Mammary epithelial cell (primary cell): ENCODE measurements at regions of chr1 and their contacts with region 1.

Region 1: DNA sequence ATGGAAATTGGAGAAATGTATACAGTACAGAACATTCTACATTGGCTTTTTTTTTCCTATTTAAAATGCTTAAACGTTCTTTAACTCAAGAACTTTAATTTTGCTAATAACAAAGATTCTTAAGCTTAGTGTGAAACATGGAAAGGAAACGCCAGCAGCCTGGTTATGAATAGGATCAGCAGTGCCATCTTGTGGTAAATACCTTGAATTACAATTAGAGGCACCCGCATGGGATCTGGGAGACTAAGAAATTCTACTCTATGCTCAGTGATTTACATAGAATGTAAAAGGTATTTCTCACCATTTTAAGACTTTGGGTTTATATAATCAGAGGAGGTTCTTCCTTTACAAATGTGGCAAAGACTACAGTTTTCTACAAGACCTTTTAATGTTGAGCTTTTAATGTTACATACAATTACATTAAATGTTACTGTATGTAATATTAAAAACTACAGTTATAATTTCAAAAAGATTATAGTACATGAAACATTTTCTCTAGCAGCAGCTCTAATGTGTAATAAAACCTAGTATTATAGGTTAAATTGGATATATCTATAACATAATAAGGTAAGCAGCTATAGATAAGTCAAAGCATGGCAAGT is 32.1 kb upstream of the APOBEC4 start:
- DNase-seq: peak; percentile 32
- H3K4me3 ChIP-seq: no peak overlapping the region
- H3K27ac ChIP-seq: no peak overlapping the region
- H3K4me1 ChIP-seq: no peaks in the 10 kb centered on the region
- H3K27me3 ChIP-seq: no peaks in the 10 kb centered on the region
- CTCF ChIP-seq: peak; percentile 65 to 73

Region 2: GRCh38 chr1:183515018-183515689 is 170.1 kb before region 1 on chr1:
- CTCF ChIA-PET with region 1: no interaction called
- dilution Hi-C with region 1: no loop called
- in situ Hi-C with region 1: no loop called
- intact Hi-C with region 1: no loop called
- DNase-seq: peak; percentile 87
- H3K4me3 ChIP-seq: no peak overlapping the region
- H3K27ac ChIP-seq: peak overlapping the region; percentile 50
- H3K4me1 ChIP-seq: peaks cover 33% of the 10 kb centered on the region
- H3K27me3 ChIP-seq: no peaks in the 10 kb centered on the region
- CTCF ChIP-seq: no peak

Region 3: DNA sequence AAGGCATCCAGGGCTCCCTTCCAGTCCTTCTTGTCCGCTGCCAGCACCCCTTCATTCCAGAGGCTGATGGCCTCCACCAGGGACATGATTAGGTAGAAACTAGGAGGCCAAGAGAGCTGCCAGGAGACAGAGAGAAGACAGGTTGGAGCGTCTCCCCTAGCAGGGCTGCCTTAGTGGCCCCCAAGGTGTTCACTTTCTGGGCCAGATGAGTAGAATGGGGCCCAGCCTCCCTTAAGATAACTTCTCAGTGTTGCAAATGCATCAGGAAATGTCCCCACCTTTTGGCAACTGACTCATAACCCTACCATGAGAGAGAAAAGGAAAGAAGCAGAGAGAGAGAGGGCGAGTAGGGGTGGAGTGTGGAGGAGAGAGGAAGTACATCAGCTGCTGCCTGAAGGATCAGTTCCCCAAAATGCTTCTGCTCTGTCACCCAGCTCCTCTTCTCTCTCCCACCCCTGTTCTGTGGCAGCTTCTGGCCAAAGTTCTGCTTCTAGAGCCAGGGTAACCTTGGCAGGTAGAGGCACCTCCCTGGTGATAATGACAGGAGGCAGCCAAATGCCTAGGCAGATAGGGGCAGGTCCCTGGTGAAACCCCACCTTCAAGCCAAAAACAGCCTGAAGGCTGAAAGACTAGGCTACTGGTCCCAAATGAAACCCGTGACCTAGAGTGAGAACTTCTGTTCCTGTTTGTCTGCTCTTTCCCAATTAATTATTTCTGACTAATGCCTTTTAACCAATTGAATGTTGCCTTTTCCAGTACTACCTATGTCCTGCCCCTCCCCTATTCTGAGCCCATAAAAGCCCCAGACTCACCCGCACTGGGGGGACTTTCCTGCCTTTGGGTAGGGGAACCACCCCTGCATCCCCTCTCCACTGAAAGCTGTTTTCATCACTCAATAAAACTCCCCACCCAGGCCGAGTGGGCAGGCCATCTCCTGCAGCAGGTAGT is 94.7 kb before region 1 on chr1 and contains the start of gene NCF2:
- CTCF ChIA-PET with region 1: interaction called, 15 read pairs
- dilution Hi-C with region 1: no loop called
- in situ Hi-C with region 1: no loop called
- intact Hi-C with region 1: no loop called
- DNase-seq: peak; percentile 68
- H3K4me3 ChIP-seq: no peak within 1 kb of the TSS
- H3K27ac ChIP-seq: no peak within 1 kb of the TSS
- H3K4me1 ChIP-seq: peaks cover 9% of the 10 kb centered on the region
- H3K27me3 ChIP-seq: no peaks in the 10 kb centered on the region
- CTCF ChIP-seq: no peak
- total RNA-seq, gene NCF2: under 0.01 to 8.5 TPM

Region 4: GRCh38 chr1:183635606-183636333 is 49.4 kb before region 1 on chr1 and contains the start of gene ARPC5:
- CTCF ChIA-PET with region 1: interaction called, 6 read pairs
- dilution Hi-C with region 1: no loop called
- in situ Hi-C with region 1: no loop called
- intact Hi-C with region 1: loop called (anchors 10 kb)
- DNase-seq: peak; percentile 99
- H3K4me3 ChIP-seq: peak within 1 kb of the TSS; percentile 85 to 95 (median 90)
- H3K27ac ChIP-seq: peak within 1 kb of the TSS; percentile 82
- H3K4me1 ChIP-seq: peaks cover 25% of the 10 kb centered on the region
- H3K27me3 ChIP-seq: no peaks in the 10 kb centered on the region
- CTCF ChIP-seq: no peak
- total RNA-seq, gene ARPC5: 162 to 186 TPM

Region 5: GRCh38 chr1:183655562-183656075 is 29.6 kb before region 1 on chr1:
- CTCF ChIA-PET with region 1: interaction called, 4 read pairs
- dilution Hi-C with region 1: no loop called
- in situ Hi-C with region 1: no loop called
- intact Hi-C with region 1: loop called (anchors 1 kb)
- DNase-seq: peak; percentile 56
- H3K4me3 ChIP-seq: no peak overlapping the region
- H3K27ac ChIP-seq: no peak overlapping the region
- H3K4me1 ChIP-seq: peaks cover 4% of the 10 kb centered on the region
- H3K27me3 ChIP-seq: no peaks in the 10 kb centered on the region
- CTCF ChIP-seq: peak; percentile 75 to 84

Region 6: DNA sequence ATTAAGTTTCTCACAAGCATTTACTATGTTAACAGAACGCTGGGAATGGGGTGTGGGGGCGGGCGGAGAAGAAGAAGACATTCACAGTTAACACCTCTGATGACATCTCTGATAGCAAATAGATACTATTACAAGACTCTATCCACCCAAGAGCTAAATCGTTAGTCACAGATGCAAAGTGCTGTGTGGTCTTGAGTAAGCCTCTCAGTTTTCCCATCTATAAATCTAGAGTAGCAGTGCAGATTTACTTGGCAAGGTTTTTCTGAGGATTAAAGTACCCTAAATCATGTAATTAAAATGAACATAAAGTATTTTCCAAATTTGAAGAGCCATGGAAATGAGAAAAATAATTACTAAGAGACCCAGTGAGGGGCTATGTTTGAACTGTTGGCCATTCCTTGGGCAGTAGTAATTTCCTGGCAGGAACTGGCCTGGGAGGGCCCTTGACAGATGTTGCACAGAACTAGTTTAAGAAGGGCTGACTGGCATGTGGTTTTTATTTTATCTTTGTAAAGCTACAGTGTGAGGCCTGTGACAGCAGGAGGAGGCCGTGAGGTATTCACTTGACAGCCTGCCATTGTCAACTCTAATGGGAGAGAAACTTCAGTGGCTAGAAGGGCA is 26.6 kb after region 1 on chr1:
- CTCF ChIA-PET with region 1: no interaction called
- dilution Hi-C with region 1: no loop called
- in situ Hi-C with region 1: no loop called
- intact Hi-C with region 1: no loop called
- DNase-seq: no peak
- H3K4me3 ChIP-seq: no peak overlapping the region
- H3K27ac ChIP-seq: no peak overlapping the region
- H3K4me1 ChIP-seq: no peaks in the 10 kb centered on the region
- H3K27me3 ChIP-seq: no peaks in the 10 kb centered on the region
- CTCF ChIP-seq: no peak